Heart right ventricle (tissue), 16 donors: ENCODE measurements at regions of chr19 and their contacts with region 1.

Region 1: GRCh38 chr19:6737284-6738046 is at the start of gene GPR108:
- DNase-seq: peak; percentile 99 to 100
- ATAC-seq: peak; percentile 79 to 91 (median 86)
- H3K4me3 ChIP-seq: peak within 1 kb of the TSS; percentile 59 to 99 (median 86)
- H3K27ac ChIP-seq: peak within 1 kb of the TSS; percentile 94 to 100 (median 98)
- H3K4me1 ChIP-seq: peaks cover 12 to 59% (median 44%) of the 10 kb centered on the region in 9 donors
- H3K27me3 ChIP-seq: peaks cover 0 to 10% (median 0%) of the 10 kb centered on the region in 7 donors
- CTCF ChIP-seq: no peak
- total RNA-seq, gene GPR108: 20.4 to 33.6 (median 21.5) TPM

Region 2: GRCh38 chr19:6516659-6517291 is 220.7 kb before region 1 on chr19:
- intact Hi-C with region 1: loop called in 5 of 10 experiments (anchors 2 to 10 kb)
- DNase-seq: peak; percentile 87 to 94
- ATAC-seq: peak; percentile 90 to 98 (median 94)
- H3K4me3 ChIP-seq: peak overlapping the region; percentile 48 to 73 (median 62)
- H3K27ac ChIP-seq: peak overlapping the region in 9 of 10 donors; percentile 33 to 77 (median 54)
- H3K4me1 ChIP-seq: peaks cover 0 to 31% (median 12%) of the 10 kb centered on the region in 9 donors
- H3K27me3 ChIP-seq: peaks cover 0 to 13% (median 9%) of the 10 kb centered on the region in 7 donors
- CTCF ChIP-seq: peak in 8 of 9 donors; percentile 87 to 98 (median 96)

Region 3: GRCh38 chr19:6674868-6675305 is 62.6 kb before region 1 on chr19:
- intact Hi-C with region 1: no loop called
- DNase-seq: peak; percentile 23 to 47
- ATAC-seq: peak in 7 of 8 donors; percentile 42 to 77 (median 65)
- H3K4me3 ChIP-seq: peak overlapping the region in 1 of 10 donors; percentile 26
- H3K27ac ChIP-seq: peak overlapping the region in 1 of 10 donors; percentile 58
- H3K4me1 ChIP-seq: peaks cover 0 to 28% (median 0%) of the 10 kb centered on the region in 9 donors
- H3K27me3 ChIP-seq: peaks cover 0 to 38% (median 9%) of the 10 kb centered on the region in 7 donors
- CTCF ChIP-seq: no peak

Region 4: DNA sequence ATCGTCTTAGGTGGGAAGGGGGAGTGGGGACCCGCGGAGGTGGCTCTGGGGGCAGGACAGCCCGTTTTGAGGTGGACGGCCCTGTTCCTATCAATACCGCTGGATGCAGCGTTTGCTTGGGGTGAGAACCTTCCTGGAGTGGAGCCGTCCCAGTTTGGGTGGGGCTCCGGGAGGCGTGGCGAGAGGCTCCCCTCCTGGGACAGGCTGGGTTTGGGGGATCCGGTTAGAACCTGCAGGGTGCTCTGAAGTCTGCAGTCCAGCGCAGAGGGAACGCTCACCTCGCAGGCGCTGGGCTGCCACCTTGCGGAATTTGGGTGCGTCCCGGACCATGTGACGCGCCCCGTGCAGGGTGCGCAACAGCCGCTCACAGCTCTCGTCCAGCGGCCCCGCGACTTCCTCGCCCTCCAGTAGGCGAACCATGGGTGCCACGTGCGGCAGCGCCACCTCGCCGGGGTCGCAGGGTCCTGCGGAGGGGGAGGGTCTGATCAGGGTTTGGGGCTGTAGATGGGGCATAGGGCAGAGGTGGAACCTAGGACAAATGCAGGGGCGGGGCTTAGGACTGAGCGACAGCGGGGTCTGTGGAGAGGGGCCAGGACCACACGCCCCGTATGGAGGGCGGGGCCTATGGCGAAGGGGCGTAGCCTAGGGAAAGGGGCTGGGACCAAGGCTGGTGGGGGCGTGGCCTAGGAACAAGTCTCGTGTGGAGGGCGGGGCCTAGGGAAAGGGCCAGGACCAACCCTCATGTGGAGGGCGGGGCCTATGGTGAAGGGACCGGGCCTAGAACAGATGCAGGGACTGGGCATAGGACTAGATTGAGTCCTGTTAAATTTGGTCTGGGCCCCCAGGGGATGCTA is 15.9 kb after region 1 on chr19:
- intact Hi-C with region 1: loop called in 1 of 10 experiments (anchors 2 kb)
- DNase-seq: peak; percentile 68 to 80
- ATAC-seq: peak; percentile 77 to 90 (median 88)
- H3K4me3 ChIP-seq: peak overlapping the region in 8 of 10 donors; percentile 18 to 51 (median 48)
- H3K27ac ChIP-seq: peak overlapping the region in 5 of 10 donors; percentile 2 to 56 (median 19)
- H3K4me1 ChIP-seq: peaks cover 3 to 18% (median 13%) of the 10 kb centered on the region in 9 donors
- H3K27me3 ChIP-seq: no peaks in the 10 kb centered on the region
- CTCF ChIP-seq: peak in 8 of 9 donors; percentile 32 to 71 (median 55)

Region 5: GRCh38 chr19:7069042-7069903 is 331.8 kb after region 1 on chr19 and contains the start of gene ZNF557:
- intact Hi-C with region 1: loop called in 1 of 10 experiments (anchors 10 kb)
- DNase-seq: peak; percentile 99
- ATAC-seq: peak; percentile 100
- H3K4me3 ChIP-seq: peak within 1 kb of the TSS; percentile 74 to 99 (median 87)
- H3K27ac ChIP-seq: peak within 1 kb of the TSS; percentile 53 to 93 (median 84)
- H3K4me1 ChIP-seq: peaks cover 0 to 15% (median 10%) of the 10 kb centered on the region in 9 donors
- H3K27me3 ChIP-seq: no peaks in the 10 kb centered on the region
- CTCF ChIP-seq: no peak
- total RNA-seq, gene ZNF557: 3.4 to 5.8 (median 4.2) TPM

Region 6: DNA sequence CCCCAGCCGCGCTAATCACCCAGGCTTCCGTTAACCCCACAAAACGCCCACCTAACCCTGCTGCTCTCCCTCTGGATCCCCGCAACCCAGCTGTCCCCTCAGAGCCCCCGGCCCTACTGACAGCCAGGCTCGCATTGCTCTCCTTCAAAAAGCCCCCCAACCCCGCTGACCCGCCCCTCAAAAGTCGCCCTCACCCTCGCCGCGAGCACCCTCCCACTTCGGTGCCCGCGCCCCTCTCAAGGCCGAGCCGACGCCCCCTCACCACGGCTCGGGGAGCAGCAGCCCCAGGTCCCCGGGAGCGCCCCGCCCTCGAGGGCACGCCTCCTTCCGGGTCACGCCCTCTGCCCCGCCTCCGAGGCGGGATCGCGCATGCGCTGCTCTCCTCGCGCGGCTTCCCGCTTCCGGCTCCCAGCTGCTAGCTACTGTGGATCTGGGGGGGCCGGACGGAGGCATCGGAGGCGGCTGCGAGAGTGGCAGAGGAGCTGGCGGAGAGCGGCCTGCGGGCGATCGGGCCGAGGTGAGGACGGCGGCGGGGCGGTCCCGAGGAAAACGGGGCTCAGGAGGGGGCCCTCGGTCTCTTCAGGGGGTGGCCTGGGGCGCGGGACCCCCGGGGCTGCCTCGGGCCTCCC is 657.4 kb after region 1 on chr19:
- intact Hi-C with region 1: loop called in 1 of 10 experiments (anchors 10 kb)
- DNase-seq: peak; percentile 88 to 93
- ATAC-seq: peak; percentile 99 to 100 (median 99)
- H3K4me3 ChIP-seq: peak overlapping the region; percentile 69 to 100 (median 98)
- H3K27ac ChIP-seq: peak overlapping the region in 9 of 10 donors; percentile 57 to 93 (median 83)
- H3K4me1 ChIP-seq: peaks cover 0 to 38% (median 20%) of the 10 kb centered on the region in 9 donors
- H3K27me3 ChIP-seq: no peaks in the 10 kb centered on the region
- CTCF ChIP-seq: peak in 3 of 9 donors; percentile 15 to 17 (median 16)